Caco-2 (cell line): ENCODE measurements at regions of chr20 and their contacts with region 1.

Region 1: GRCh38 chr20:25399037-25399430 is 8.4 kb upstream of the ABHD12 start:
- DNase-seq: peak in 1 of 2 experiments; percentile 71
- H3K4me3 ChIP-seq: no peak overlapping the region
- H3K4me3 Mint-ChIP-seq: no peak overlapping the region
- H3K27ac Mint-ChIP-seq: peak overlapping the region; percentile 87
- H3K4me1 ChIP-seq: peaks cover 25% of the 10 kb centered on the region
- H3K4me1 Mint-ChIP-seq: peaks cover 21% of the 10 kb centered on the region
- H3K27me3 ChIP-seq: no peaks in the 10 kb centered on the region
- H3K27me3 Mint-ChIP-seq: no peaks in the 10 kb centered on the region
- CTCF ChIP-seq: peak; percentile 45 to 52

Region 2: DNA sequence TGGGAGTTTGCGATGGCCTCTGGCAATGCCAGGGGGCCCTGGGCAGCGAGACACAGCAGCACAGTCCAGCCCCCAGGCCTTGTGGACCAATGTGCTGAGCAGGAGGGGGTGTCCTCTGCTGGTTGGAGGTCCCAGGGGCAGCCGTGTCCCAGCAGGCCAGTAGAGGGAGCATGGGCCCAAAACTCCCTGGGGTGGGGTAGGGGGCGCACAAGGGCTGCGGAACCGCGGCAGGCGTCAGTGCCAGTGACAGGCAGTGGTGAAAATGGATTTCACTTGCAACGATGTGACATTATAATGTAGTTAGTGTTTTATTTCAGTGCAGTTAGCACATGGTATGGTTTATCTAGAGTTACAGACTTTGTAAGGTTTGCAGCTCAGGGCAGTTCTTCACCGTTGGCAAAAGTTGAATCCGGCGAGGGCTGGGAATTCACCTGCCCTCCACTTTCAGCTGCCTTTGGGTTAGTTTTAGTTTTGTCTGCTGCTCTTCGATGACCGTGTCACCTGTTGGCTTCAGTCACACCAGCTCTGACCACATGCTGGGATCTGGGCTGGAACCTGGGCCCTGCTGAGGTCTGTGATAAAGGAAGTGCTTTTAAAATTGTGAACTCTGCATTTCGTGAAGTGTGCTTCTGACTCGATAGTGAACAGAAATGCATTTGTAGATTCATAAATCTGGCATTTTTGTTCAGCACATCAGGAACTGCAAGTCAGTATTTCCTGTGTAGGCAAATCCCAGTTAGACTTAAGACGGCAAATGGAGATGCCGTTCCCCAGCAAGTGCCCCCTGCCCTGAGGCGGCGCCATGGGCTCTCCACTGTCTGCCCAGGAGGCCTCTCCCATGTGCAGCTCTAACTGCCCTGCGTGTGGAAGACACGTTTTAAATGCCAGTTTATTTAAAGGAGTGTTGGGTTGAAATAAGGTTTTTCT is 104.3 kb before region 1 on chr20:
- CTCF ChIA-PET with region 1: interaction called, 12 read pairs
- POLR2A ChIA-PET with region 1: no interaction called
- intact Hi-C with region 1: loop called (anchors 5 kb)
- DNase-seq: peak; percentile 75 to 86
- H3K4me3 ChIP-seq: no peak overlapping the region
- H3K4me3 Mint-ChIP-seq: no peak overlapping the region
- H3K27ac Mint-ChIP-seq: no peak overlapping the region
- H3K4me1 ChIP-seq: no peaks in the 10 kb centered on the region
- H3K4me1 Mint-ChIP-seq: no peaks in the 10 kb centered on the region
- H3K27me3 ChIP-seq: no peaks in the 10 kb centered on the region
- H3K27me3 Mint-ChIP-seq: no peaks in the 10 kb centered on the region
- CTCF ChIP-seq: peak; percentile 92 to 99

Region 3: GRCh38 chr20:25310268-25310920 is 88.6 kb before region 1 on chr20:
- CTCF ChIA-PET with region 1: interaction called, 9 read pairs
- POLR2A ChIA-PET with region 1: no interaction called
- intact Hi-C with region 1: loop called (anchors 1 kb)
- DNase-seq: peak; percentile 87 to 90
- H3K4me3 ChIP-seq: no peak overlapping the region
- H3K4me3 Mint-ChIP-seq: peak overlapping the region; percentile 51
- H3K27ac Mint-ChIP-seq: peak overlapping the region; percentile 87
- H3K4me1 ChIP-seq: peaks cover 31% of the 10 kb centered on the region
- H3K4me1 Mint-ChIP-seq: peaks cover 28% of the 10 kb centered on the region
- H3K27me3 ChIP-seq: no peaks in the 10 kb centered on the region
- H3K27me3 Mint-ChIP-seq: no peaks in the 10 kb centered on the region
- CTCF ChIP-seq: peak; percentile 57 to 91

Region 4: GRCh38 chr20:25324412-25324811 is 74.6 kb before region 1 on chr20:
- CTCF ChIA-PET with region 1: no interaction called
- POLR2A ChIA-PET with region 1: no interaction called
- intact Hi-C with region 1: no loop called
- DNase-seq: no peak
- H3K4me3 ChIP-seq: no peak overlapping the region
- H3K4me3 Mint-ChIP-seq: no peak overlapping the region
- H3K27ac Mint-ChIP-seq: no peak overlapping the region
- H3K4me1 ChIP-seq: no peaks in the 10 kb centered on the region
- H3K4me1 Mint-ChIP-seq: peaks cover 9% of the 10 kb centered on the region
- H3K27me3 ChIP-seq: no peaks in the 10 kb centered on the region
- H3K27me3 Mint-ChIP-seq: no peaks in the 10 kb centered on the region
- CTCF ChIP-seq: no peak

Region 5: GRCh38 chr20:25353747-25354705 is 45.0 kb before region 1 on chr20:
- CTCF ChIA-PET with region 1: no interaction called
- POLR2A ChIA-PET with region 1: no interaction called
- intact Hi-C with region 1: loop called (anchors 1 kb)
- DNase-seq: peak; percentile 73 to 78
- H3K4me3 ChIP-seq: no peak overlapping the region
- H3K4me3 Mint-ChIP-seq: peak overlapping the region; percentile 18
- H3K27ac Mint-ChIP-seq: peak overlapping the region; percentile 46
- H3K4me1 ChIP-seq: peaks cover 27% of the 10 kb centered on the region
- H3K4me1 Mint-ChIP-seq: peaks cover 18% of the 10 kb centered on the region
- H3K27me3 ChIP-seq: no peaks in the 10 kb centered on the region
- H3K27me3 Mint-ChIP-seq: no peaks in the 10 kb centered on the region
- CTCF ChIP-seq: no peak

Region 6: DNA sequence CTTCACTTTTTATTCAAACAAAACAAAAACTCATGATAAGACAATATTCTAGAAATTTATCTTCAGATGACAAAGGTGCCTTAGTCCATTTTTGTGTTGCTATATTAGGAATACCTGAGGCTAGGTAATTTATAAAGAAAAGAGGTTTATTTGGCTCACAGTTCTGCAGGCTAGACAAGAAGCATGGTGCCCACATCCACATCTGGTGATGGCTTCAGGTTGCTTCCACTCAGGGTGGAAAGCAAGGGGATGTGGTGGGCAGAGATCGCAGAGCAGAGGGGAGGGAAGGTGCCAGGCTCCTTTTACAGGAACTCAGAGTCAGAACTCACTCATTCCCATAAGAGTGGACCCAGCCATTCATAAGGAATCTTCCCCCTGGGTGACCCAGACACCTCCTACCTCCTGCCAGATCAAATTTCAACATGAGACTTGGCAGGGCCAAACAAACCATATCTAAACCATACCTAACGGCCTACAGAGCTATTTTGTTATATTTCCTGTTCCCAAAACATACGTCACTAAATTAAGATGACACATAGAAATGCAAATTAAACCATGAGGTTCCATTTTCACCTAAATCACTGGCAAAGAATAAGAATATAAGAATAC is 34.8 kb before region 1 on chr20:
- CTCF ChIA-PET with region 1: no interaction called
- POLR2A ChIA-PET with region 1: no interaction called
- intact Hi-C with region 1: no loop called
- DNase-seq: no peak
- H3K4me3 ChIP-seq: no peak overlapping the region
- H3K4me3 Mint-ChIP-seq: no peak overlapping the region
- H3K27ac Mint-ChIP-seq: no peak overlapping the region
- H3K4me1 ChIP-seq: peaks cover 19% of the 10 kb centered on the region
- H3K4me1 Mint-ChIP-seq: peaks cover 17% of the 10 kb centered on the region
- H3K27me3 ChIP-seq: no peaks in the 10 kb centered on the region
- H3K27me3 Mint-ChIP-seq: no peaks in the 10 kb centered on the region
- CTCF ChIP-seq: no peak

Region 7: GRCh38 chr20:25382704-25383565 is 16.1 kb before region 1 on chr20:
- CTCF ChIA-PET with region 1: interaction called, 4 read pairs
- POLR2A ChIA-PET with region 1: interaction called, 7 read pairs
- intact Hi-C with region 1: loop called (anchors 1 kb)
- DNase-seq: no peak
- H3K4me3 ChIP-seq: no peak overlapping the region
- H3K4me3 Mint-ChIP-seq: no peak overlapping the region
- H3K27ac Mint-ChIP-seq: no peak overlapping the region
- H3K4me1 ChIP-seq: peaks cover 36% of the 10 kb centered on the region
- H3K4me1 Mint-ChIP-seq: peaks cover 57% of the 10 kb centered on the region
- H3K27me3 ChIP-seq: no peaks in the 10 kb centered on the region
- H3K27me3 Mint-ChIP-seq: no peaks in the 10 kb centered on the region
- CTCF ChIP-seq: no peak

Region 8: GRCh38 chr20:25418776-25419175 is 19.7 kb after region 1 on chr20:
- CTCF ChIA-PET with region 1: no interaction called
- POLR2A ChIA-PET with region 1: no interaction called
- intact Hi-C with region 1: no loop called
- DNase-seq: no peak
- H3K4me3 ChIP-seq: no peak overlapping the region
- H3K4me3 Mint-ChIP-seq: no peak overlapping the region
- H3K27ac Mint-ChIP-seq: no peak overlapping the region
- H3K4me1 ChIP-seq: peaks cover 7% of the 10 kb centered on the region; the same call in 1 of the 2 replicates
- H3K4me1 Mint-ChIP-seq: no peaks in the 10 kb centered on the region
- H3K27me3 ChIP-seq: no peaks in the 10 kb centered on the region
- H3K27me3 Mint-ChIP-seq: no peaks in the 10 kb centered on the region
- CTCF ChIP-seq: no peak

Region 9: GRCh38 chr20:25632940-25633790 is 234.1 kb after region 1 on chr20:
- CTCF ChIA-PET with region 1: no interaction called
- POLR2A ChIA-PET with region 1: no interaction called
- intact Hi-C with region 1: no loop called
- DNase-seq: no peak
- H3K4me3 ChIP-seq: no peak overlapping the region
- H3K4me3 Mint-ChIP-seq: no peak overlapping the region
- H3K27ac Mint-ChIP-seq: no peak overlapping the region
- H3K4me1 ChIP-seq: no peaks in the 10 kb centered on the region
- H3K4me1 Mint-ChIP-seq: no peaks in the 10 kb centered on the region
- H3K27me3 ChIP-seq: no peaks in the 10 kb centered on the region
- H3K27me3 Mint-ChIP-seq: no peaks in the 10 kb centered on the region
- CTCF ChIP-seq: no peak